ENCODE measurements at regions of chr2 and their contacts with region 1.

Region 1: DNA sequence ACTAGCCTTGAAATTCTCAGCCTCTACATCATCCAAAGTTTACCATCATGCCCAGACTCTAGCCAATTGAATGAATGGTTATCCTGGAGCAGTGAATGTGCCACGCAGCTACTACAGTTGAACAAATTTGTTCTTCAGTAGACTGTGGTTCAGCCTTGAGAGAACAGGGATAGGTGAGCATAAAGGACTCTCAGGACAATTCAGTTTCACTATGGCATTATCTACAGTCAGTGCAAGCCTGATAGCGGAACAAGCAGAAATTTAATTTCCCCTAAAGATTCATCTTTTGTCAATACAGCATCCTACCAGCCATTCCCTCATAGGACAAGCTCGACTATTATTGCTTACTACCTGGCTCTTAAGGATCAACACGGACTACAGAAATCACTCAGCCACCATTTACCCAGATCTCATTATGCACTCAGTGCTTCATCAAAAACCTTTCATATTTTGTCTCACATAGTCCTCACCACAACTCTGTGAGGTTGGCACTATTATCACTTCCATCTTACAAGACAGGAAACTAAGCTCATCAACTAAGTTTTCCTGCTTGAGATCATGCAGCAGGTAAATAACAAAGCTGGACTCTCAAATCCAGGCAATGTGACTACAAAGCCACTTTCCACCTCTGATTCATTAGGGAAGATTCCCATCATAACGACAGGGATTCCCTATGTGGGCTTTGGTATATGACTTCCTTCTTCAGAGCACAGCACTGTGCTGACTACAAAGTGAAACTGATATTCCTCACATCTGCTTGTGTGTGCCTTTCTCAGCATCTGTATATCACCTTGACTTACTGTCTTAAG is 181.5 kb upstream of the ACVR2A start:
- DNase-seq: peak; percentile 42 to 78 (median 66)
- H3K4me3 ChIP-seq: peak overlapping the region; percentile 3 to 54
- H3K4me3 Mint-ChIP-seq: peak overlapping the region; percentile 76 to 90 (median 85)
- H3K27ac ChIP-seq: peak overlapping the region; percentile 57
- H3K27ac Mint-ChIP-seq: peak overlapping the region; percentile 81 to 96 (median 93)
- H3K4me1 ChIP-seq: peaks cover 21% of the 10 kb centered on the region
- H3K4me1 Mint-ChIP-seq: peaks cover 34 to 56% (median 45%) of the 10 kb centered on the region in 4 donors
- H3K27me3 ChIP-seq: no peaks in the 10 kb centered on the region
- H3K27me3 Mint-ChIP-seq: no peaks in the 10 kb centered on the region

Region 2: GRCh38 chr2:147297820-147298219 is 365.5 kb before region 1 on chr2:
- CTCF ChIA-PET with region 1: no interaction called
- POLR2A ChIA-PET with region 1: interaction called, 16 read pairs
- intact Hi-C with region 1: loop called (anchors 5 kb)
- DNase-seq: peak; percentile 60 to 67 (median 64)
- H3K4me3 ChIP-seq: no peak overlapping the region
- H3K4me3 Mint-ChIP-seq: peak overlapping the region in 7 of 8 donors; percentile 27 to 79 (median 64)
- H3K27ac ChIP-seq: peak overlapping the region; percentile 25
- H3K27ac Mint-ChIP-seq: peak overlapping the region; percentile 79 to 97 (median 89)
- H3K4me1 ChIP-seq: peaks cover 72% of the 10 kb centered on the region
- H3K4me1 Mint-ChIP-seq: peaks cover 56 to 83% (median 65%) of the 10 kb centered on the region in 4 donors
- H3K27me3 ChIP-seq: no peaks in the 10 kb centered on the region
- H3K27me3 Mint-ChIP-seq: no peaks in the 10 kb centered on the region

Region 3: GRCh38 chr2:147449323-147449991 is 213.9 kb before region 1 on chr2:
- CTCF ChIA-PET with region 1: no interaction called
- POLR2A ChIA-PET with region 1: no interaction called
- intact Hi-C with region 1: loop called (anchors 2 kb)
- DNase-seq: peak; percentile 73 to 84 (median 80)
- H3K4me3 ChIP-seq: peak overlapping the region in 1 of 2 donors; percentile 3
- H3K4me3 Mint-ChIP-seq: peak overlapping the region; percentile 59 to 82 (median 72)
- H3K27ac ChIP-seq: peak overlapping the region; percentile 84
- H3K27ac Mint-ChIP-seq: peak overlapping the region; percentile 95 to 99 (median 97)
- H3K4me1 ChIP-seq: peaks cover 21% of the 10 kb centered on the region
- H3K4me1 Mint-ChIP-seq: peaks cover 11 to 35% (median 23%) of the 10 kb centered on the region in 4 donors
- H3K27me3 ChIP-seq: no peaks in the 10 kb centered on the region
- H3K27me3 Mint-ChIP-seq: no peaks in the 10 kb centered on the region

Region 4: GRCh38 chr2:147499785-147500184 is 163.6 kb before region 1 on chr2:
- CTCF ChIA-PET with region 1: no interaction called
- POLR2A ChIA-PET with region 1: interaction called, 10 read pairs
- intact Hi-C with region 1: loop called (anchors 5 kb)
- DNase-seq: no peak
- H3K4me3 ChIP-seq: no peak overlapping the region
- H3K4me3 Mint-ChIP-seq: peak overlapping the region in 7 of 8 donors; percentile 36 to 87 (median 70)
- H3K27ac ChIP-seq: peak overlapping the region; percentile 5
- H3K27ac Mint-ChIP-seq: peak overlapping the region; percentile 2 to 78 (median 61)
- H3K4me1 ChIP-seq: peaks cover 52% of the 10 kb centered on the region
- H3K4me1 Mint-ChIP-seq: peaks cover 48 to 77% (median 63%) of the 10 kb centered on the region in 4 donors
- H3K27me3 ChIP-seq: no peaks in the 10 kb centered on the region
- H3K27me3 Mint-ChIP-seq: no peaks in the 10 kb centered on the region

Region 5: DNA sequence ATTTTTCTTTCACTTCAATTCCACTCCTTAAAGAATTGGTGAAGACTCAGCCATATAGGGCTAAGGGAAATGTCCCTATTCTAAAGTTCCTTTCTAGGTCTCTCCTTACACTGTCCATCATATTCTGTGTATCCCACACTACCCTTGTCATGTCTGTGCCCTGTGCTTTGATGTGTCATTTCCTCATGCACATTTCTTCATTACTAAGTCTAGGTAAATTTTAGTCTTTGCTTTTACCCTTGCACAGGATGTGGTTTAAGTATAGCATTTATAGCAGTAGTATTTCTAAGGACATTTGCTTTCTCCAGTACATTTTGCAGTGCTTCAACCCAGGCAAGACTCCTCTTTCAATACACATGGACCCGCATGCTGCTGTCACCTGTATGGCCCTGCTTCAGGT is 40.0 kb before region 1 on chr2:
- CTCF ChIA-PET with region 1: interaction called, 3 read pairs
- POLR2A ChIA-PET with region 1: interaction called, 11 read pairs
- intact Hi-C with region 1: loop called (anchors 5 kb)
- DNase-seq: peak in 4 of 5 donors; percentile 40 to 56 (median 47)
- H3K4me3 ChIP-seq: no peak overlapping the region
- H3K4me3 Mint-ChIP-seq: peak overlapping the region in 5 of 8 donors; percentile 1 to 60 (median 15)
- H3K27ac ChIP-seq: no peak overlapping the region
- H3K27ac Mint-ChIP-seq: peak overlapping the region in 5 of 7 donors; percentile 1 to 17 (median 2)
- H3K4me1 ChIP-seq: peaks cover 22% of the 10 kb centered on the region
- H3K4me1 Mint-ChIP-seq: peaks cover 6 to 25% (median 17%) of the 10 kb centered on the region in 4 donors
- H3K27me3 ChIP-seq: no peaks in the 10 kb centered on the region
- H3K27me3 Mint-ChIP-seq: no peaks in the 10 kb centered on the region

Region 6: GRCh38 chr2:147636238-147636882 is 27.0 kb before region 1 on chr2:
- CTCF ChIA-PET with region 1: no interaction called
- POLR2A ChIA-PET with region 1: interaction called, 13 read pairs
- intact Hi-C with region 1: no loop called
- DNase-seq: no peak
- H3K4me3 ChIP-seq: no peak overlapping the region
- H3K4me3 Mint-ChIP-seq: no peak overlapping the region
- H3K27ac ChIP-seq: no peak overlapping the region
- H3K27ac Mint-ChIP-seq: peak overlapping the region in 1 of 7 donors; percentile 77
- H3K4me1 ChIP-seq: peaks cover 13% of the 10 kb centered on the region
- H3K4me1 Mint-ChIP-seq: peaks cover 0 to 11% (median 7%) of the 10 kb centered on the region in 4 donors
- H3K27me3 ChIP-seq: no peaks in the 10 kb centered on the region
- H3K27me3 Mint-ChIP-seq: peaks cover 0 to 2% of the 10 kb centered on the region in 2 donors